Common myeloid progenitor, CD34-positive (primary cell): ENCODE measurements at regions of chr4 and their contacts with region 1.

Region 1: GRCh38 chr4:48681856-48682255 is 98.2 kb downstream of the FRYL start:
- DNase-seq: peak; percentile 60 to 69 (median 69)
- H3K4me3 ChIP-seq: no peak overlapping the region
- H3K27ac ChIP-seq: peak overlapping the region in 1 of 2 experiments; percentile 54
- H3K4me1 ChIP-seq: peaks cover 4 to 16% (median 13%) of the 10 kb centered on the region in 4 experiments
- H3K27me3 ChIP-seq: no peaks in the 10 kb centered on the region

Region 2: GRCh38 chr4:48578132-48578968 is 103.5 kb before region 1 on chr4:
- CTCF ChIA-PET with region 1: interaction called, 27 read pairs
- POLR2A ChIA-PET with region 1: no interaction called
- DNase-seq: peak; percentile 69 to 82 (median 75)
- H3K4me3 ChIP-seq: no peak overlapping the region
- H3K27ac ChIP-seq: no peak overlapping the region
- H3K4me1 ChIP-seq: no peaks in the 10 kb centered on the region
- H3K27me3 ChIP-seq: no peaks in the 10 kb centered on the region

Region 3: DNA sequence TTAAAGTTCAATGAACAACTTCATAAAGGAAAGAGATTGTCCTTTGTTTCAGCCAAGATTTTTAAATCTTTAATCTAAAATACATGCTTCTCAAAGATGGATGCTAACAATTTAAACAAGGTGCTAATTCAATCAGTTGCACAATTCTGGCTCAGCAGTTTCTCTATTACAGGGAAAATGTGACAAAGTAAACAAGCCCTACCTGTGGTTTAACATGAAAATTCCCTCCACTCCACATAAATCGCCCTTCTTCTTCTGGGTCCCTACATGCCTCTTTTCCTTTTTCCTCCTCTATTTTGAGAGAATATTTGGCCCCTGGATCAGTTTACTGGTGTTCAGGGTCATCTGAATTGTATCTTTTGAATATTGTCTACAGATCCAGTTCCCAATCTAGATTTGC is 17.6 kb after region 1 on chr4:
- CTCF ChIA-PET with region 1: interaction called, 10 read pairs
- POLR2A ChIA-PET with region 1: no interaction called
- DNase-seq: no peak
- H3K4me3 ChIP-seq: no peak overlapping the region
- H3K27ac ChIP-seq: no peak overlapping the region
- H3K4me1 ChIP-seq: peaks cover 0 to 11% (median 4%) of the 10 kb centered on the region in 4 experiments
- H3K27me3 ChIP-seq: no peaks in the 10 kb centered on the region

Region 4: DNA sequence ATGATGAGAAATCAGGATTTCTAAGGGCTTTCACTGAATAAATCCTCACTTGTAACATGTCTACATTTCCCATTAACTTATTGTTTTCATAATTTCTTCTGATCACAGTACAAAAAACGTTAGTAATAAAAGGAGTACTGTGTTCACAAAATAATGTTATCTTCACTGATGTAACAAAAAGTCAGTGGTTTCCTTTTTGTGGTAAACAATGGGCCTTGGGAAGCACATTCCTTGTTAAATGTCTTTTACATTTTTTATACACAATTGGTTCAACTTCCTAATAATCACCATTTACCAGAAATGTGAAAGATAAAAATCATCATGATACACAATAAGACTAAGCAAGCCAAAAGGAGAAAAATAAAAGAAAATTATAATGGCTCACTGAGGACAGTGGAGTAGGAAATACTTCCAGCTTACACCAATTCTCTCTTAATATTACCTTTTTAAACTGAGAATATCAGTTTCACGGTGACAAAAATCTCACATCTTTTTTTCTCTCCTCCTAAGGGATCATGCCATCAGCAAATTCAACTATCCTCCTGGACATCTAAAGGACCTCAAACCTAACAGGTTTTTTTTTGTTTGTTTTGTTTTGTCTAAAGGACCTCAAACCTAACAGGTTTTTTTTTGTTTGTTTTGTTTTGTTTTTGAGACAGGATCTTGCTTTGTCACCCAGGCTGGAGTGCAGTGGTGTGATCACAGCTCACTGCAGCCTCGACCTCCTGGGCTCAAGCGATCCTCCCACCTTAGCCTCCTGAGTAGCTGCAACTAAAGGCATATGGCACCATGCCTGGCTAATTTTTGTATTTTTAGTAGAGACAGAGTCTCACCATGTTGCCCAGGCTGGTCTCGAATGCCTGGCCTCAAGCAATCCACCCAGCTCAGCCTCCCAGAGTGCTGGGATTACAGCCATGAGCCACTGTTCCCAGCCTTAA is 40.9 kb after region 1 on chr4:
- CTCF ChIA-PET with region 1: no interaction called
- POLR2A ChIA-PET with region 1: no interaction called
- DNase-seq: peak; percentile 25 to 40 (median 28)
- H3K4me3 ChIP-seq: peak overlapping the region in 1 of 7 experiments; percentile 20
- H3K27ac ChIP-seq: peak overlapping the region; percentile 3 to 63
- H3K4me1 ChIP-seq: peaks cover 3 to 27% (median 19%) of the 10 kb centered on the region in 4 experiments
- H3K27me3 ChIP-seq: no peaks in the 10 kb centered on the region